IMR-90 (cell line): ENCODE measurements at regions of chr7 and their contacts with region 1.

Region 1: DNA sequence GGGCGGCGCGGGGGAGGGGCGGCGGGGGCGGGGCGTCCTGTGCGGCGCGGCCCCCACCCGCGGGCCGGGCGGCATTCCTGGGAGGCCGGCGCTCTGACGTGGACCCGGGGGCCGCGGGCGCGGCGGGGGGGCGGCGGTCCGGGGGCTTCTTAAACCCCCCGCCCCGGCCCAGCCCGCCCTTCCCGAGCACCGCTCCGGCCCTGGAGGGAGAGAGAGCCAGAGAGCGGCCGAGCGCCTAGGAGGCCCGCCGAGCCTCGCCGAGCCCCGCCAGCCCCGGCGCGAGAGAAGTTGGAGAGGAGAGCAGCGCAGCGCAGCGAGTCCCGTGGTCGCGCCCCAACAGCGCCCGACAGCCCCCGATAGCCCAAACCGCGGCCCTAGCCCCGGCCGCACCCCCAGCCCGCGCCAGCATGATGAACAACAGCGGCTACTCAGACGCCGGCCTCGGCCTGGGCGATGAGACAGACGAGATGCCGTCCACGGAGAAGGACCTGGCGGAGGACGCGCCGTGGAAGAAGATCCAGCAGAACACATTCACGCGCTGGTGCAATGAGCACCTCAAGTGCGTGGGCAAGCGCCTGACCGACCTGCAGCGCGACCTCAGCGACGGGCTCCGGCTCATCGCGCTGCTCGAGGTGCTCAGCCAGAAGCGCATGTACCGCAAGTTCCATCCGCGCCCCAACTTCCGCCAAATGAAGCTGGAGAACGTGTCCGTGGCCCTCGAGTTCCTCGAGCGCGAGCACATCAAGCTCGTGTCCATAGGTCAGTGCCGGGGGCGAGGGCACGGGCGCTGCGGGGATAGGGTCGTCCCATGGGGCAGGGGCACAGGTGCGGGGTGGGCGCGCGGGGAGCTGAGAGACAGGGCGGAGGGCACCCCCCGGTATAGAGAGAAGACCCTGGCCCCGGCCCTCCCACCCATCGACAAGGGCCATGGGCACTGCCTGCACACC is at the start of gene FLNC:
- DNase-seq: peak; percentile 71
- ATAC-seq: peak; percentile 33
- H3K4me3 ChIP-seq: peak within 1 kb of the TSS; percentile 99
- H3K27ac ChIP-seq: peak within 1 kb of the TSS; percentile 95
- H3K4me1 ChIP-seq: peaks cover 34% of the 10 kb centered on the region
- H3K27me3 ChIP-seq: no peaks in the 10 kb centered on the region
- CTCF ChIP-seq: no peak
- POLR2A ChIP-seq: peak; percentile 98
- RAD21 ChIP-seq: no peak
- total RNA-seq, gene FLNC: 116 and 139 TPM in 2 replicates

Region 2: DNA sequence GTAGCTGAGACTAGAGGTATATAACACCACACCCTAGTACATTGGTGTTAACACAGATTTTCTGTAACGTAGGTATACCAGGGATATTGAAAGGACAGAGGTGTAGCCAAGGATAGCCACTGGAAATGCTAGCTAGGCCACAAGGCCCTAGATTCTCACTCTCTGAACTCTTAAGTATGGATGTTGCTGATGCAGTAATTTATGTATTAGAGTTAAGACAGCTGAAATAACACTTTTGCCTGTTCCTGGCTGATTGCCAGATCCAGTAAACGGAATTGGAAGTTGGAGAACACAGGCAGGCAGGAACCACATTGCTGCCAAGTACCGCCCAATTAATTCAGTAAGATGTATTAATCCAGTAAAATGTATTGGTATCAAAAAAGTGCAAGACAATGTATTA is 89.5 kb before region 1 on chr7:
- CTCF ChIA-PET with region 1: no interaction called
- POLR2A ChIA-PET with region 1: interaction called, 12 read pairs
- dilution Hi-C with region 1: no loop called
- in situ Hi-C with region 1: no loop called
- intact Hi-C with region 1: loop called (anchors 5 kb)
- DNase-seq: no peak
- ATAC-seq: no peak
- H3K4me3 ChIP-seq: peak overlapping the region; percentile 81
- H3K27ac ChIP-seq: no peak overlapping the region
- H3K4me1 ChIP-seq: peaks cover 8% of the 10 kb centered on the region
- H3K27me3 ChIP-seq: no peaks in the 10 kb centered on the region
- CTCF ChIP-seq: no peak
- POLR2A ChIP-seq: peak; percentile 38; the same call in 1 of the 2 replicates
- RAD21 ChIP-seq: no peak

Region 3: GRCh38 chr7:128755819-128756476 is 74.6 kb before region 1 on chr7:
- CTCF ChIA-PET with region 1: no interaction called
- POLR2A ChIA-PET with region 1: interaction called, 3 read pairs
- dilution Hi-C with region 1: no loop called
- in situ Hi-C with region 1: no loop called
- intact Hi-C with region 1: loop called (anchors 2 kb)
- DNase-seq: peak; percentile 96
- ATAC-seq: peak; percentile 94
- H3K4me3 ChIP-seq: no peak overlapping the region
- H3K27ac ChIP-seq: peak overlapping the region; percentile 40; the same call in 1 of the 2 replicates
- H3K4me1 ChIP-seq: peaks cover 11% of the 10 kb centered on the region
- H3K27me3 ChIP-seq: no peaks in the 10 kb centered on the region
- CTCF ChIP-seq: no peak
- POLR2A ChIP-seq: peak; percentile 30; the same call in 1 of the 2 replicates
- RAD21 ChIP-seq: peak; percentile 26

Region 4: GRCh38 chr7:128791121-128791961 is 39.2 kb before region 1 on chr7:
- CTCF ChIA-PET with region 1: no interaction called
- POLR2A ChIA-PET with region 1: no interaction called
- dilution Hi-C with region 1: no loop called
- in situ Hi-C with region 1: no loop called
- intact Hi-C with region 1: loop called (anchors 5 kb)
- DNase-seq: peak; percentile 38
- ATAC-seq: peak; percentile 94
- H3K4me3 ChIP-seq: peak overlapping the region; percentile 95
- H3K27ac ChIP-seq: peak overlapping the region; percentile 32; the same call in 1 of the 2 replicates
- H3K4me1 ChIP-seq: peaks cover 9% of the 10 kb centered on the region
- H3K27me3 ChIP-seq: peaks cover 11% of the 10 kb centered on the region; the same call in 1 of the 2 replicates
- CTCF ChIP-seq: no peak
- POLR2A ChIP-seq: no peak
- RAD21 ChIP-seq: no peak

Region 5: DNA sequence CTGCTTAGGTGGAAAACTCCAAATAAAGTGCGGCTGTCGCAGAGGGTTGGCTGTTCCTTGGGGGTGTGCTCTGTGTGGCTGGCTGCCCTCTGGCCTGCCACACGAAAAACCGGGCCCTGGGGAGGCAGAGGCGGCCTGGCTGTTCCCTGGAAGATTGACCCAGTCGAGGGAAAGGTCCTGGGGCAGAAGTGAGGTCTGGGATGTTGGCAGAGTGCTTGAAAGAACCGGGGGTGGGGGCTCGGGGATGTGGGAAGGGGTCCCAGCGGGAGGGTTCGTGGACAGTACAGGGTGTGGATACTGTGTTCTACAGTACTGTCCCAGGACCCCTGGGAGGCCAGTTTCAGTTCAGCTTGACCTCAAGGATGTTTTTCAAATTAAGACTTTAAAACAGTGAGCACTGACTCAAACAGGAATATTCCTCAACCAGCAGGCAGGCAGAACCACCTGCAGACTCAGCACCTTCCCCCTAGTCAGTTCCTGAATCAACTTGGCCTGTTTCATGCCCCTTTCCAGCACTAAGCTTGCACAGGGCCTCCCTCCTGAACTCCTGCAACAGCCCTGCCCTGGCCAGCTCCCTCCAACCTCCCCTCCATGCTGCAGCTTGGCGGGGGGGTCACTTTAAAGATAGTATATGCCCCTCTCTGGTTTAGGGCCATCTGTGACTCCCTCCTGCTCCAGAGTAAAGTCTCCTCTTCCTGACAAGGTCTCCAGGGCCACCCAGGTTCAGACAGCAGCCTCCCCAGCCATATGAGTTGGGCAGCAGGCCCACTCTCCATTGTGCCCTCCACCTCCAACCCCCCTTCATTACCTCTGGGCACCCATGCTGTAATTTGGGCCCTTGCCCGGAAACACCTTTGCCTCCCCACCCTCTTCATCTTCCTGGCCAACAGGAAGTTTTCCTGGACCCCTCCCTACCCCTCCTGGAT is 29.0 kb after region 1 on chr7:
- CTCF ChIA-PET with region 1: no interaction called
- POLR2A ChIA-PET with region 1: interaction called, 26 read pairs
- dilution Hi-C with region 1: no loop called
- in situ Hi-C with region 1: no loop called
- intact Hi-C with region 1: no loop called
- DNase-seq: no peak
- ATAC-seq: no peak
- H3K4me3 ChIP-seq: no peak overlapping the region
- H3K27ac ChIP-seq: no peak overlapping the region
- H3K4me1 ChIP-seq: peaks cover 2% of the 10 kb centered on the region
- H3K27me3 ChIP-seq: no peaks in the 10 kb centered on the region
- CTCF ChIP-seq: no peak
- POLR2A ChIP-seq: no peak
- RAD21 ChIP-seq: no peak

Region 6: GRCh38 chr7:129176916-129177710 is 346.6 kb after region 1 on chr7:
- CTCF ChIA-PET with region 1: no interaction called
- POLR2A ChIA-PET with region 1: no interaction called
- dilution Hi-C with region 1: no loop called
- in situ Hi-C with region 1: no loop called
- intact Hi-C with region 1: no loop called
- DNase-seq: no peak
- ATAC-seq: peak; percentile 24; the same call in 1 of the 2 replicates
- H3K4me3 ChIP-seq: no peak overlapping the region
- H3K27ac ChIP-seq: no peak overlapping the region
- H3K4me1 ChIP-seq: no peaks in the 10 kb centered on the region
- H3K27me3 ChIP-seq: peaks cover 39% of the 10 kb centered on the region
- CTCF ChIP-seq: no peak
- POLR2A ChIP-seq: no peak
- RAD21 ChIP-seq: no peak